BJ (cell line): ENCODE measurements at regions of chr7 and their contacts with region 1.

Region 1: GRCh38 chr7:111855161-111855856 is 293.0 kb upstream of the IMMP2L start:
- DNase-seq: no peak
- H3K4me3 ChIP-seq: no peak overlapping the region
- H3K27me3 ChIP-seq: no peaks in the 10 kb centered on the region
- CTCF ChIP-seq: peak; percentile 75

Region 2: GRCh38 chr7:111741811-111742240 is 113.5 kb before region 1 on chr7:
- CTCF ChIA-PET with region 1: interaction called, 18 read pairs
- POLR2A ChIA-PET with region 1: no interaction called
- DNase-seq: no peak
- H3K4me3 ChIP-seq: no peak overlapping the region
- H3K27me3 ChIP-seq: no peaks in the 10 kb centered on the region
- CTCF ChIP-seq: peak; percentile 70

Region 3: DNA sequence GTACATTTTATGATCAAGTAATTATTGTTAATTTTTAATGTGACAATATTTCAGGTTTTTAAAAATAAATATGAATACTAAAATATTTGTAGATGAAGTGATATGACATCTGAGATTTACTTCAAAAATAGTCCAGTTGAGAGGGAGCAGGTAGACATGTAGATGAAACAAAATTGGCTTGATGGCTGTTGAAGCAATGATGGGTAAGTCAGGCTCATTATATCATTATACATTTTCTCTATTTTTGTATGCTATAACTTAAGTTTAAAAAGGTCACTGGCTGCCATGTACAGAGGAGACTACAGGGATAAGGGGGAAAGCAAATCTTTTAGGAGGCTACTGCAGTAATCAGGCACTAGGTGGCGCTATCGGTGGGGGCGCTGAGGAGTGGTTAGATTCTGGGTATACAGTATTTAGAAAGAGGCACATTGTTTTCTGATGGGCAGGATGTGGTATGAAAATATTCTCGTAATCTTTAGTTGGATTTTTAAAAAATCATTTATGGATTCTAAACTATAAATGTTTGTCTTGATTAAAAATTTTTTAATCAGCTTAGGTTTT is 103.2 kb before region 1 on chr7:
- CTCF ChIA-PET with region 1: interaction called, 77 read pairs
- POLR2A ChIA-PET with region 1: no interaction called
- DNase-seq: no peak
- H3K4me3 ChIP-seq: no peak overlapping the region
- H3K27me3 ChIP-seq: no peaks in the 10 kb centered on the region; the same call in 1 of the 2 replicates
- CTCF ChIP-seq: peak; percentile 86

Region 4: DNA sequence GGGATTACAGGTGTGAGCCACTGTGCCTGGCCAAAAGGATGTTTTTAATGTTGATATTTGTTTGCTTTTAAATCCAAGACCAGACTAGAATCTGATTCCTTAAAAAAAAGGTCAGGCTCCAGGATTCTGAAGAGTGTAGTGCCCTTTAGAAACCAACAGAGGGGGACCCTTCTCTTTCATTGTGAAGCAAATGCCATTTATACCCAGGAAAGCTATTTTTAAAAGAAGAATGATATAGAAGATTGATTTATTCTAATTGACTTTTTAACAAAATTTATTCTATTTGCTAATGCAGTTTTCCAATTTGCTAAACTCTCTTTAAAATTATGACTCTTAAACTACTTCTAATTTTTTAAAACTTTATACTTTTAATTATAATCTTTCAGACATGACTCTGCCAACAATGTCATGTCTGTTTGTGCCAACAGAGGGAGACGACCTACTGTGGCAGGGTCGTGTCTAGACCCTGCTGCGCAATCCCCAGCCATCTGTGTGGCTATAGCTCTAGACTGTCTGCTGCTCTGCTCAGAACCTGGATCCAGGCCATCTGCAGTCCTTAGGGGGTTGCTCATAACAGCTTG is 92.0 kb before region 1 on chr7:
- CTCF ChIA-PET with region 1: interaction called, 86 read pairs
- POLR2A ChIA-PET with region 1: no interaction called
- DNase-seq: no peak
- H3K4me3 ChIP-seq: no peak overlapping the region
- H3K27me3 ChIP-seq: no peaks in the 10 kb centered on the region
- CTCF ChIP-seq: peak; percentile 73

Region 5: GRCh38 chr7:111841596-111842205 is 13.6 kb before region 1 on chr7:
- CTCF ChIA-PET with region 1: interaction called, 19 read pairs
- POLR2A ChIA-PET with region 1: no interaction called
- DNase-seq: no peak
- H3K4me3 ChIP-seq: no peak overlapping the region
- H3K27me3 ChIP-seq: no peaks in the 10 kb centered on the region
- CTCF ChIP-seq: no peak

Region 6: DNA sequence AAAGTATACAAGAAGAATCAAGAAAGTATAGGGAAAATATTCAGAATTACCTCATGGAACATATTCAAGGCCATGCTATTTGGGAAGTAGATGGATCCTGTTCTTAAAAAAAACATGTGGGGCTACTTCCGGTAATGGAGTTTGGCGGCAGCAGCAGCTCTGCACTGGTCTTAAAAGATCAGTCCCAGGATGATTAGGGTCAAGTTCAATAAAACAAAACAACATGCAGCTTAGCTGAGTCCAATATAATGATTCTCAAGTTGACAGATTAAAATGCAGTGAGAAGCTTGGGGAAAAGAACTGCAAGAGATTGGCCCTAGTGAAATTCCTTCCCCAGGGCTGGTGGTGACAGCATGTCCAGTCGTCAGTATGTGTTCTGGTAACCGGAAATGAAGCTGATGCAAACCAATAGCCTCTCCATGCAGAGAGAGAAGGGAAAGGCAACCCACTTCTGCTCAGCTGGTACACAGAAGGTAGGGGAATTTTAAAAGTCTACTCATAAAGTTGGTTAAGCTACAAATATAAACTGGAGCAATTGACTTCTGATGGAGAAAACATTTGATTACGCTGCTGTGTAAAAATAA is 12.1 kb after region 1 on chr7:
- CTCF ChIA-PET with region 1: interaction called, 41 read pairs
- POLR2A ChIA-PET with region 1: no interaction called
- DNase-seq: no peak
- H3K4me3 ChIP-seq: no peak overlapping the region
- H3K27me3 ChIP-seq: no peaks in the 10 kb centered on the region
- CTCF ChIP-seq: no peak

Region 7: DNA sequence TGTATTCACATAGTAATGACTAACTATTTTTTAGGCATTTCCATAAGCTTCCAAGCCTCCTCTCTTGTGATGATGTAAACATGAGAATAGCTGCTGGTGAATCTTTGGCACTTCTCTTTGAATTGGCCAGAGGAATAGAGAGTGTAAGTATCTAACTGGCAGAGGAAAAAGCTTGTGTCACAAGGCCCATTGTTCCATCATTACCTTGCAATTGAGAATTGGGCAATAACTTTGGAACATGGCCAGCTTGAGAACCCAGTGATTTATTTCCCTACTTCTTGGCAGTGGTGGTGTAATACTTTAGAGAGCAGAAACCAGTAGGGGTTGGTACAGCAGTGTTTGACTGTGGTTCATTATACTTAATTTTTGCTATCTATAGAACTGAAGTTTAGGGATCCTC is 606.9 kb after region 1 on chr7:
- CTCF ChIA-PET with region 1: no interaction called
- POLR2A ChIA-PET with region 1: no interaction called
- DNase-seq: no peak
- H3K4me3 ChIP-seq: no peak overlapping the region
- H3K27me3 ChIP-seq: no peaks in the 10 kb centered on the region
- CTCF ChIP-seq: no peak

Region 8: DNA sequence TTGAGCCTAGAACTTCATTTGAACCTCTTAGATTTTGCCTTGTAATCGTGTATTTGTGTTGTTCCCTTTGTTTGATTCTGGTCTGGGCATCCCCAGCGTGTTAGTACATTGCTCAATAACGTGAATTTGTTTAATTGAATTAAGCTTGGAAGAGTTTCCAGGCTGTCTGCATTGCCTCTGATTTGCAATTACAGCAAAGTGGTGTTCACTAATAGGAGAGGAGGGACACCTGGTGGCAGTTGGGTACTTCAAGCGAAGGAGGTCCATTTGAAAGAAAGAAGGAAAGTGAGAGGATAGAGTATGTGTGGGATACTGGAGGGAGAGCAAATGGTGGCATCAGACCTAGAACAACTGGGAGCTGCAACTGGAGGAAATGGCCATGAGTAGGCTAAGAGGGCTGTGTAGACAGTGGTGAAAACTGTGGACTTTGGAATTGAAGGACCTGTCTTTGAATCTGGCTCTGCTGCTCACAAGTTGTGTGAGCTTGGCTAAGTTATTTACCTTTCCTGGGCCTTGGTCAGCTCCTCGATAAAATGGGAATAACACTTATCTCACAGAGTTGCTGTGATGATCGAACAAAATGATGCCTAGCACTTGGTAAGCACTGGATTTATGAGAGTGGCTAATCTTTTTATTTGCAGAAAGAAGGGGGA is 640.6 kb after region 1 on chr7:
- CTCF ChIA-PET with region 1: interaction called, 12 read pairs
- POLR2A ChIA-PET with region 1: no interaction called
- DNase-seq: no peak
- H3K4me3 ChIP-seq: no peak overlapping the region
- H3K27me3 ChIP-seq: peaks cover 6% of the 10 kb centered on the region
- CTCF ChIP-seq: peak; percentile 66